Activated naive CD4-positive, alpha-beta T cell treated with anti-CD3 and anti-CD28 coated beads for 36 hours (primary cell): ENCODE measurements at regions of chr5 and their contacts with region 1.

Region 1: DNA sequence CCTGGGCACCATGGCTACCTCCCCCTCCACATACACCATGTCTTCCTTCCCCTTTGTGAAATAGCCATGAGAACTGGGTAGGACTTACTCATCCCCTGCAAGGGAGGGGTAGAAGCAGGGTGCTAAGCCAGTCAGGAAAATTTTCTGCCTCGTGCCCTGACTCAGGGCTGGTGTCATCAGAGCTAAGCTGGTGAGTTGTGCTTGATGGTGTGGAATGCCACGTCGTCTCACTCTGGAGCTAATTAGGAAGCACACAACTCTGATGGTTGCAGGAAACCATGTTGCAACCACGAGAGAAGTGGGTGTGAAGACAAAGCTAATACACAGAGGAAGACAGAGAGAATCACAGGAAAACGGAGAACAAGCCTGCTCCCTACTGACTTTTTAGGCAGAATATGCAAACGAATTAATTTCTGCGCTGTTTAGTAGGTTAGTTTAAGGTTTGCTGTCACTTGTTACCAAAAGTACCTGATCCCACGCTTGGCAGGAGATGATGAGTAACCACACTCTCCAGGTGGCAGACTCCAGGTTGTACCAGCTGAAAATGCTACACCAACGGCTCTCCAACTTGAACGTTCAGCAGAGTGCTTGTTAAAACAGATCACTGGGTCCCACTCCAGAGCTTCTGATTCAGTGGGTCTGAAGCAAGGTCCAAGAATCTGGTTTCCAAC is 54.5 kb downstream of the STK10 start:
- DNase-seq: peak; percentile 86
- H3K4me3 Mint-ChIP-seq: peak overlapping the region; percentile 53
- H3K27ac Mint-ChIP-seq: peak overlapping the region; percentile 88
- H3K4me1 Mint-ChIP-seq: peaks cover 61% of the 10 kb centered on the region
- H3K27me3 Mint-ChIP-seq: no peaks in the 10 kb centered on the region

Region 2: DNA sequence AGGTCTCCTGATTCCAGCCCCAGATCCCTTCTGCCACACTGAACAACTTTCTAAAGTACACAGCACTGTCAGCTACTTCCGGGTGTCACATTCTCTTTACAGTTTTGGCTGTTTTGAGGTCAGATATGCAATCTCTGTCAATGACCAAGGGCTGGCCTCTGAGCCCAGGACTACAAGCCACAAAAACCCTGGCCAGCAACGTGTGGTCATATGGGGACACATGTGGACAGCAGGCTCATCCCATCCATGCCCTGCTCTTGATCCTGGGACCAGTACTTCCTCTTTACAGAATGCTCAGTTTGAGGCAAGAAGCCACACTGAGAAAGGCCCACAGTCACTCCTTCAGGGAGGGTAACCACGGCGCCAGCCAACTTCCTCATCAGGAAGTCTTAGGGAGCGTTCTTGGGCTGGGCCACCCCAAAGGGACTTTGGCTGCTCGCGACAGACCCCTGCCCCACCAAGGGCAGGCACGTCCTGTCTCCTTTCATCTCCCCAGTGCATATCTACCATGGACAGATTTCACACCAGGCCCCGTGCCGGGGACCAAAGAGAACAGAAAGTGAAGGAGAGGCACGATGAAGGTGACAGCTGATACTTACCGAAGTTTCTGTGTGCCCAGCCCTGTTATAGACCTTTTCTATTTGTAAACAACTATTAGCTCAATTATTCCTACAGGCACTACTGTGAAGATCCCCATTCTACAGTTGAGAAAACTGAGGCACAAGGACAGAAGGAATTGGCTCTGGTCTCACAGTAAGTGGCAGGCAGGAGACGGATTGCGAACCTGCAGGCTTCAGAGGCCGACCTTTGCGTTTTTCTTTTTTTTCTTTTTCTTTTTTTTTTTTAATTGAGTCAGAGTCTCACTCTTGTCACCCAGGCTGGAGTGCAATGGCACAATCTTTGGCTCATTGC is 17.3 kb after region 1 on chr5:
- CTCF ChIA-PET with region 1: no interaction called
- intact Hi-C with region 1: loop called (anchors 1 kb)
- DNase-seq: peak; percentile 38
- H3K4me3 Mint-ChIP-seq: peak overlapping the region; percentile 64
- H3K27ac Mint-ChIP-seq: peak overlapping the region; percentile 91
- H3K4me1 Mint-ChIP-seq: peaks cover 77% of the 10 kb centered on the region
- H3K27me3 Mint-ChIP-seq: no peaks in the 10 kb centered on the region